Calu3 (cell line): ENCODE measurements at regions of chr12 and their contacts with region 1.

Region 1: GRCh38 chr12:118016424-118017264 is at the start of gene RFC5:
- DNase-seq: peak; percentile 99
- H3K4me3 Mint-ChIP-seq: peak within 1 kb of the TSS; percentile 88
- H3K27ac Mint-ChIP-seq: peak within 1 kb of the TSS; percentile 97
- H3K4me1 Mint-ChIP-seq: peaks cover 16% of the 10 kb centered on the region
- H3K27me3 Mint-ChIP-seq: no peaks in the 10 kb centered on the region
- CTCF ChIP-seq: no peak
- total RNA-seq, gene RFC5: 52.0 and 54.6 TPM in 2 replicates

Region 2: DNA sequence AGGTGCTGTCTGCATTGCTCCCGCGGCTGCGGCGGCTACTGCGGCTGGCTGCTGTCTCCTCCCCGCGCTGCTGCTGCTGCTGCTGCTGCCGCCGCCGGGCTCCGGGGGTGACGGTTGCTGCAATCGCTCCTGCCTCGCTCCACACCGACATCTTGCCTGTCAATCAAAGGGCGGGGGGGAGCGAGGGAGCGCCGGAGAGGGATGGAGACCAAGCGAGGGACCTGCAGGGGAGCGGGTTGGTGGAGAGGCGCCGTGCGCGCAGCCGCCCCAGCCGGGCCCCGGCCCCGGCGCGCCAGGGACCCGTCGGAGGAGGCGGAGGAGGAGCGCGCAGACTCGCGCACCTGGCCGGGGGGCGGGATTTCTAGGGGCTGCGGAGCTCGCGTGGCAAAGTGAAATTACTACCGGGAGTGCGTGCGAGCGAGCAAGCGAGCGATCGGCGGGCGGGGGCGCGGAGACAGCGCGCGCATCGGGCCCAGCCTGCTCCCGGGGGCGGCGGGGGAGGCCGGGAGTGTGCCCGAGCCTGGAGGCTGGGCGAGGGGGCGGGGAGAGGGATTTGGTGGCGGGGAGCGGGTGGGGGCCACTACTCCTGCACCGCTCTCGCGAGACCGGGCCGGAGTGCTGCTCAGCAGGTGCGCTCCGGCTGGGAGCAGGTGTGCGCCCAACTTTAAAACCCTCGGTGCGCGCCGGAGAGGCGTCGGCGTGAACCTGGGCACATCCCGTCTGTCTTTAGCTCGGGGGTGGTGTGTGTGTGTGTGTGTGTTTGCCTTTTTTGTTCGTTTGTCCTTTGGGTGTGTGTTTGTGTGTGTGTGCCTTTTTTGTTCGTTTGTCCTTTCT is 47.6 kb before region 1 on chr12 and contains the start of gene KSR2:
- CTCF ChIA-PET with region 1: no interaction called
- intact Hi-C with region 1: loop called (anchors 2 kb)
- DNase-seq: peak; percentile 93
- H3K4me3 Mint-ChIP-seq: peak within 1 kb of the TSS; percentile 90
- H3K27ac Mint-ChIP-seq: peak within 1 kb of the TSS; percentile 86
- H3K4me1 Mint-ChIP-seq: peaks cover 10% of the 10 kb centered on the region
- H3K27me3 Mint-ChIP-seq: peaks cover 41% of the 10 kb centered on the region
- CTCF ChIP-seq: no peak
- total RNA-seq, gene KSR2: 1.6 and 1.9 TPM in 2 replicates

Region 3: DNA sequence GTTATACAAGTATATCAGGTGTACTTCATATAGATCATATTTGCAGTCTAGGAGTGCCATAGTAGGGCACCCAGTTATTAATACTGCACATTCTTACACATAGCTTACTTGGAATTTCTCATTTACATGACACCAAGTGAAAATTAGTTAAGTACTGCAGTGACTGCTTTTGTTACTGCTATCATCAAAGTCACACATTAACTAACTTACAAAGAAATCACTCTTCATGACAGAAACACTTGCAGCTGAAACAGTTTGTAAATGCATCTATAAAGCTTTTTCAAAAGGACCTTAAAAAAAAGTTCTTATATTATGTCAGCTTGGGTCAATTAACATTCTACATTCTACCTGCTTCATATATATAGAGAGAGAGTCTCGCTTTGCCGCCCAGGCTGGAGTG is 17.9 kb before region 1 on chr12:
- CTCF ChIA-PET with region 1: no interaction called
- intact Hi-C with region 1: no loop called
- DNase-seq: no peak
- H3K4me3 Mint-ChIP-seq: no peak overlapping the region
- H3K27ac Mint-ChIP-seq: no peak overlapping the region
- H3K4me1 Mint-ChIP-seq: no peaks in the 10 kb centered on the region
- H3K27me3 Mint-ChIP-seq: peaks cover 14% of the 10 kb centered on the region
- CTCF ChIP-seq: no peak

Region 4: DNA sequence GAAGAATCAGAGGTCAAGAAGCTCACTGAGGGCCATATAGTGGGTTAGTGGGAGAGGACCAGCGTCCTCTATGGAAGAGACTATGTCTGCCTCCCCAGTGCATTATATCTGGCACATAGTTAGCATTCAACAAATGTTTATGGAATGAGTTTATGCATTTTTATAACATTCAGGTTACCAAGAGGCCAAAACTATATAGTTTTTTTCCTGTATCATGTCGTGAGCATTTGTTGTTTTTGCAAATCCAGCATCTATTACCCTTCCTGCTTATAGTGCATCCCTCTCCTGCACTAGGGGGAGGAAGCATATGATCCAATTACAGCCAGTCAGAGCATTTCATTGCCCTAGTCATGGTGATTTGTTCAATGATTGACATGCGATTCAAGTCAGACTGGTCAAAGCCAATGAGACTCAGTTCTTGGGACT is 420.4 kb after region 1 on chr12:
- CTCF ChIA-PET with region 1: no interaction called
- intact Hi-C with region 1: no loop called
- DNase-seq: no peak
- H3K4me3 Mint-ChIP-seq: no peak overlapping the region
- H3K27ac Mint-ChIP-seq: no peak overlapping the region
- H3K4me1 Mint-ChIP-seq: no peaks in the 10 kb centered on the region
- H3K27me3 Mint-ChIP-seq: peaks cover 13% of the 10 kb centered on the region
- CTCF ChIP-seq: no peak